HCT116 (cell line): ENCODE measurements at regions of chr12 and their contacts with region 1.

Region 1: GRCh38 chr12:67592216-67593011 is 56.1 kb upstream of the DYRK2 start:
- DNase-seq: peak; percentile 18
- ATAC-seq: peak; percentile 43; the same call in 1 of the 2 replicates
- H3K4me3 ChIP-seq: peak overlapping the region in 1 of 2 experiments; percentile 17; a peak in 2 of 4 replicates
- H3K27ac ChIP-seq: peak overlapping the region; percentile 54; the same call in 1 of the 2 replicates
- H3K4me1 ChIP-seq: peaks cover 18 to 35% of the 10 kb centered on the region in 2 experiments
- H3K27me3 ChIP-seq: no peaks in the 10 kb centered on the region
- CTCF ChIP-seq: no peak
- POLR2A ChIP-seq: no peak
- RAD21 ChIP-seq: no peak

Region 2: DNA sequence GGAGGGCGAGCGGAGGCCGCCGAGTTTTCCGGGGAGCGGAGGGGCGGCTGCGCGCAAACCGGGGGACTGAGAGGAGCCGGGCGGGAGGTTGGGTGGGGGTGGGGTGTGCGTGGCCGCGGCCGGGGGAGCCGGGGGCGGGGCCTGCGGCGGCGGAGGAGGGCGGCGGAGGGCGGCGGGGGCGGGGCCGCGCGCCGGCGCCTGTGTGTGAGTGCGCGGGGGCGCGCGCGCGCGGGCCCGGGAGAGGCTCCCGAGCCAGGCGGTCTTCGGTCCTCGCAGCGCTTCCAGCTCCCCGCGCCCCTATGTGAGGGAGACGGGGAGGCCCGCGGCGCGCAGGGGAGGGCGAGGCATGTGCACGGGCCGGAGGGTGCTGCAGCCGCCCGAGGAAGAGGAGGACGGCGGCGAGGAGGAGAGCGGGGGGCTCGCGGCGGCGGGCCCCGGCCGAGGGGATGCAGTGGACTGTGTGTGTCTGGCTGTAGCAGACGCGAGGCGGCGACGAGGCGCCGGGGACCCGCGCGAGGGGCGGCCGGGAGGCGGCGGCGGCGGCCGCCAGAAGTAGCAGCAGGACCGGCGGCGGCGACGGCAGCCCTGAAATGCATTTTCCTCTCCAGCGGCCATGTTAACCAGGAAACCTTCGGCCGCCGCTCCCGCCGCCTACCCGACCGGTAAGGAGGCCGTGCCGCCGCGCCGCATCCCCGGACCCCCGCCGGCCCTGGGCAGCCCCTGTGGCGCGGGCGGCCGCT is 56.3 kb after region 1 on chr12 and contains the start of gene DYRK2:
- CTCF ChIA-PET with region 1: no interaction called
- POLR2A ChIA-PET with region 1: no interaction called
- RAD21 ChIA-PET with region 1: interaction called in 1 of 2 experiments, 7 read pairs
- intact Hi-C with region 1: loop called (anchors 1 kb)
- DNase-seq: peak; percentile 27
- ATAC-seq: peak; percentile 65
- H3K4me3 ChIP-seq: peak within 1 kb of the TSS; percentile 70 to 80
- H3K27ac ChIP-seq: peak within 1 kb of the TSS; percentile 79
- H3K4me1 ChIP-seq: peaks cover 14 to 30% of the 10 kb centered on the region in 2 experiments
- H3K27me3 ChIP-seq: no peaks in the 10 kb centered on the region
- CTCF ChIP-seq: no peak
- POLR2A ChIP-seq: peak; percentile 71
- RAD21 ChIP-seq: 0 out of 2 replicates have a peak, but pooled peaks have one; percentile 14
- total RNA-seq, gene DYRK2: 28.7 TPM

Region 3: GRCh38 chr12:67981287-67982162 is 389.1 kb after region 1 on chr12:
- CTCF ChIA-PET with region 1: no interaction called
- POLR2A ChIA-PET with region 1: no interaction called
- RAD21 ChIA-PET with region 1: no interaction called
- intact Hi-C with region 1: no loop called
- DNase-seq: peak; percentile 81
- ATAC-seq: peak; percentile 94
- H3K4me3 ChIP-seq: peak overlapping the region in 1 of 2 experiments; percentile 13; a peak in 2 of 4 replicates
- H3K27ac ChIP-seq: peak overlapping the region; percentile 60; the same call in 1 of the 2 replicates
- H3K4me1 ChIP-seq: peaks cover 8 to 24% of the 10 kb centered on the region in 2 experiments; a peak in 3 of 4 replicates
- H3K27me3 ChIP-seq: no peaks in the 10 kb centered on the region
- CTCF ChIP-seq: no peak
- POLR2A ChIP-seq: no peak
- RAD21 ChIP-seq: no peak